ENCODE measurements at regions of chr2 and their contacts with region 1.

Region 1: DNA sequence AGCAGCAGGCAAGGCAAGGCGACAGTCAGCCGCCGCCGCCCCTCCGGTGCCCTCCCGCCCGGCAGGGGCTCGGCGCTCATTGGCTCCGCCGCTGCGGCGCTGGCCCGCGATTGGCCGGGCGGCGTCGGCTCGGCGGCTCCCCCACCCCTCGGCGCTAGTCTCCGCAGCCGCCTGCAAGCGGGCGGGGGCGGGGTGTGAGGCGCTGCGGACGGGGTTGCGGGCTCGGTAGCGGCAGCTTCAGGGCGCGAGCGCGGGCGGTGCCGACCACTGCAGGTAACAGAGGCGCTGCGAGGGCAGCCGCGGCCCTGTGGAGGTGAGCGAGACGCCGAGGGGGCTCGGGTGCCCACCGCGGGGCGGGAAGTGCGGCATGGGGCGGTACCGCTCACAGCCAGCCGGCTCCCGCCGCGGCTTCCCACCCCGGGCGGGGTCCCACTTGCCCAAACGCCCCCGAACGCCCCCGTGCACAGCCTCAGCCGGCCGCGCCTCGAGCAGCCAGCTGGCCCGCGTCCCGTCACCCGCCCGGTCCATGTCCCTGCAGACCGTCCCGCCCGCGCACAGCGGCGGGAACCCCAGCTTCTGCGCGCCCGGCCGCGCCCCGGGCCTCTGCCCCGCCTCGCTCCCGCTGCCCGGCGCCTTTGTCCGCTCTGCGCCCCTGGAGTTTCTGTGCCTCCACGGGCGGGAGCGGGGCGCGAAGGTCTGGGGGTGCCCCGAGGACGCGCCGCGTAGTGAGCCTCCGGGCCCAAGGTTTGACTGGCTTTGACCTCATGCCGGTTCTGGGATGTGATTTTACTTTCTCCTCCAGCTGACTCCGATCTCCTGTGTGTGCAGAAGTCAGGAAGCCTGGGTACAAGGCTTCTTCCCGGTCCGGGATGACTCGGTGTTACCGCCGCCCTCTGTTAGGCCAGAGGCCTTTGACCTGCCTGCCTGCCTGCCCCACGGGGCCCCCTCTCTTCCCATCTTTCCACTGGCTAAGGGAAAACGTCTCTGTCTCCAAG is at the start of gene SANBR:
- DNase-seq: peak; percentile 94
- ATAC-seq: peak; percentile 99
- total RNA-seq, gene SANBR: 6.9 TPM

Region 2: DNA sequence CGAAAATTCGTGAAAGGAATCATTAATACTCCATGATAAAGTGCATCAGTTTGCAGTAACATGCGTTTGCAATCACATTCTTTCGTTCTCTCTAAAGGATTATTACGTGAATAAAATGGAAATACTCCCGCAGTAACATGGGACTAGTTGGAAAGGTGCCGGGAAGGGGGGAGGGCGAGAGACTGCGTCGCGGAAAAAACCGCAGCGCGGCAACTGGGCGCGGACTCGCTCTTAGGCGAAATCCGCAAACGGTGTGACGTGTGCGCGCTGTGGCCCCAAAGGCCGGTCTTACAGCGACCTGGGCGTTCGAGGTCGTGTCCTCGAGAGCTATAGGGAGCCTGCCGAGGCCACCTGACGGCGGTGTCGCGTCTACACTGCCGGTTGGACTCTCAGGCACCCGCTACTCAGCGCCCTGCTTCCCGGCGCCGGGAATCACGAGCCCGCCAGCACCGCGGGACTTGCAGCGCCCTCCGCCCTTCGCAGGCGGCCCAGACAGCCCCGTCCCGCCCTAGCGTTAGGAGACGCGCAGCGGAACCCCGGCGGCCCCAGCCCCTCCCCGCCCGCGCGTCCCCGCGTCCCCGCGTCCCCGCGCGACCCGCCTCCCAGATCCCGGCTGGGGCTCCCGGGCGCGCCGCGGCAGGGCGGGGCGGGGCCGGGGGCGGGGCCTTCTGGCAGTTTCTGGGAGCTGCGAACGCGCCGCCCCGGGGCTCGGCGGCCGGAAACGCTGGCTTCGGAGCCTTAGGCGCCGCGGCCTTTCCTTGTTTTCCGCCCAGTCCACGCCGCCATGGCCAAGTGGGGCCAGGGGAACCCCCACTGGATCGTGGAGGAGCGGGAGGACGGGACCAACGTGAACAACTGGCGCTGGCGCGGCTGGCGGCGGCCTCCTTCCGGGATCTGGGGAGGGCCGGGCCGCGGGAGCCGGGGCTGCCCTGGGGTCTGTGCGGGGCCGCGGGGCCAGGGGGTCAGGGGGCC is 111.0 kb after region 1 on chr2:
- intact Hi-C with region 1: loop called (anchors 2 kb)
- DNase-seq: peak; percentile 97
- ATAC-seq: peak; percentile 93

Region 3: DNA sequence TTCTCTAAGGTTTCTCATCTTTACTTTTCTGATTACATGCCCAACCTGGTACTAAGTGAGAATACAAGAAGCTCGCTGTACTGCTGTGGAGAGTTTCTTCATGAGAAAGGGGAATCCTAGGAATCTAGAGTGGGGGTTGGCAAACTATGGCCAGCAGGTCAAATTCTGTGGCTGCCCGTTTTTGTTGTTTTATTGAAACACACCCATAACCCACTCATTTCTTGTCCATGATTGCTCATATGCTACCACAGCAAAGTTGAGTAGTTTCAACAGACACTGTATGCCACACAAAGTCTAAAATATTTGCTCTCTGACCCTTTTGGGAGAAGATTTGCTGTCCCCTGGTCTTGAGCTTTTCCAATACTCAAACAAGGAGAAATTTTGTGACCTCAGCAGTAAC is 154.8 kb after region 1 on chr2:
- intact Hi-C with region 1: no loop called
- DNase-seq: no peak
- ATAC-seq: no peak

Region 4: DNA sequence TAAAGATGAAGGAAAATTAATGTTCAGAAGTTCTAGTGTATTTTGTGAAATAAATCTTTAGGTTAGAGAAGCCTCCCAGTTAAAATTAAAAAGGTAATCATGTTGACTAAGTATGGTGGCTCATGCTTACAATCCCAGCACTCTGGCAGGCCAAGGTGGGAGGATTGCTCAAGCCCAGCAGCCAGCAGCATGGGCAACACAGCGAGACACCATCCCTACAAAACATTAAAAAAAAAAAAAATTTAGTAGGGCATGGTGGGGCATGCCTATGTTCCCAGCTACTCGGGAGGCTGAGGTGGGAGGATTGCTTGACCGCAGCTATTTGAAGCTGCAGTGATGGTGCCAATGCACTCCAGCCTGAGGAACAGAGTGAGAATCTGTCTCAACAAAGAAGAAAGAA is 454.2 kb after region 1 on chr2:
- intact Hi-C with region 1: no loop called
- DNase-seq: no peak
- ATAC-seq: no peak

Measured in Right ventricle myocardium inferior (tissue), 1 donor.